GM10248 (cell line): ENCODE measurements at regions of chr1 and their contacts with region 1.

Region 1: GRCh38 chr1:54800899-54801759 is at the start of gene TTC22:
- DNase-seq: peak; percentile 84
- CTCF ChIP-seq: peak; percentile 65

Region 2: DNA sequence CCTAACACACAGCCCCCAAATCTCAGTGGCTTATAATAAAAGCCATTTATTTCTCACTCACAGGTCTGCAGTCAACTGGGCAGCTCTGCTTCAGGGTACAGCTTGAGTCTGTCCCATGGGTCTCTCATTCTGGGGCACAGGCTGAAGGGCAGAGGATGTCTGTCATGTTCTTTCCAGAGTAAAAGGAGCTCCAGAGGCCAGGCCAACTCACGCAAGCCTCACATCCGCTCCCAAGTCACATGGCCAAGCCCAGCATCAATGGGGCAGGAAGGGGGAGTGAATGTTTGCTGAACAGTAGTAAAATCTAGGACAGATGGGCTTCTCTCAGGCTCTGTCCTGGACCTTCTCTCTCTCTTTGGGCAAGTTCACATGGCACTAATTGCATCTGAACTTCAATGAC is 387.8 kb before region 1 on chr1:
- CTCF ChIA-PET with region 1: no interaction called
- POLR2A ChIA-PET with region 1: no interaction called
- DNase-seq: no peak
- CTCF ChIP-seq: no peak

Region 3: DNA sequence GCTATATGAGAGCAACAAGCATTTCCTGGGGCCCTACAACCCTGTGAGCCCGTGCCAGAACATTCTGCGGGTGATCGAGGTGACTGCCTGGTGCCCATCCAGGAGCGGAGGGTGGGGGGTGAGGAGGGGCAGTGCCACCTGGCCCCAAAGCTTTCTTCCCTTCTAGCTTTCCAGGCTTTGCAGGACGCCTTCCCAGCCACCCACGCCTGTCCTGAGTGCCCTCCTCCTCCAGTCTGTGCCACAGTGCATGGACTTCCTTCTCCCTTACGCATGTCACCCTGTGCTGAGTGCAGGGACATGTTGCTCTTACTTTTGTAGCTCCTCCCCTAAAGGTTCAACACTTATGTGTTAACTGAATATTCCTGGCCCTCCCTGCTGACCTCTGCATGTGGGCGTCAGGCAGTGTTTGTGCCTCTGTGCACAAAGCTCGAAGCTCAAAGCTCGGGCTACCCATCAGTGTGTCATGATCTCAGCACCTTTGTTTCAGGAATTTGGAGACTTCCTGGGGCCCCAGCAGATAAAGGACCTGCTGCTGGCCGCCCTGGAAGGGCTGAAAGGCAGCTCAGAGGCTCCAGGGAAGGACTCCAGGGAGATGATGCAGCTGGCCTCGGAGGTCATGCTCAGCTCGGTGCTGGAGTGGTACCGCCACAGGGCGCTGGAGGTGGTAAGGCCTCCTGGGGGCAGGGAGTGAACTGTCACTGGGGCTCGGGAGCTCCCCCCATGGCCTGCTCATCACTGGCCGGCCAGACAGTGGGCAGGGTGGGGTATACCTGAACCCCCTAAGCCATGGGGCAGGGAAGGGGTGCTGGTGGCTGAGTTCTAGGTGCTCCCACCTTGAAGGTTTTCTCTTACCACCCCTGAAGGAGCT is 122.1 kb before region 1 on chr1:
- CTCF ChIA-PET with region 1: interaction called, 11 read pairs
- POLR2A ChIA-PET with region 1: no interaction called
- DNase-seq: no peak
- CTCF ChIP-seq: no peak

Region 4: GRCh38 chr1:54764133-54764921 is 36.8 kb before region 1 on chr1 and contains the start of gene PARS2:
- CTCF ChIA-PET with region 1: interaction called, 14 read pairs
- POLR2A ChIA-PET with region 1: no interaction called
- DNase-seq: peak; percentile 98
- CTCF ChIP-seq: no peak